ENCODE measurements at regions of chr4 and their contacts with region 1.

Region 1: GRCh38 chr4:114384629-114385028 is 214.0 kb upstream of the UGT8 start:
- DNase-seq: no peak
- ATAC-seq: no peak

Region 2: DNA sequence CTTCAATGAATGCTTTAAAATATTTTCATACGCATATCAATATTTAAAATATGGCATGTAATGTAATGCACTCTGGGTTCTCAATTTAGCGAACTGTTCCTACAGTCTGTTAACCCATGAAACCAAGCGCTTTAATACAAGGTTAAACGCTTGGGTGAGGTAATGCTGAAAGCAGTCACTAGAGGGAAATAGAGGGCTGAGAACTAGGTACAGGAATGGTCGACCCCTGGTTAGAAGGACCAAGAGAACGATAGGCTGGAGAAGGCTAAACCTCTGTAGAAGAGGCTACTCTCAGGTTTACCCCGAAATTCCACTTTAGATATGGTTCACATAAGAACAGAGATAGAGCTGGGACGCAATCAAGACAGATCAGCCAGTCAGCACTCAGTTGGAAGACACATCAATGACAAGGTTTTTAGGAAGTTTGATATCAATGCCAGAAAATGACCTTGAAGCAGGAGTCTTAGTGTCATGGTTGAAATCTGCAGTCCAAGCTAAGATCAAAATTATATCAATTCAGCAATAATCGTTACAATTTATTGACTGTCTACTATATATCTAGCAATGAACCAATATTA is 432.1 kb before region 1 on chr4:
- intact Hi-C with region 1: loop called (anchors 5 kb)
- DNase-seq: no peak
- ATAC-seq: peak; percentile 70

Region 3: GRCh38 chr4:114193624-114194399 is 190.8 kb before region 1 on chr4:
- intact Hi-C with region 1: no loop called
- DNase-seq: no peak
- ATAC-seq: no peak

Region 4: GRCh38 chr4:115749404-115749803 is 1364.8 kb after region 1 on chr4:
- intact Hi-C with region 1: no loop called
- DNase-seq: no peak
- ATAC-seq: no peak